ENCODE measurements at regions of chr19 and their contacts with region 1.

Region 1: DNA sequence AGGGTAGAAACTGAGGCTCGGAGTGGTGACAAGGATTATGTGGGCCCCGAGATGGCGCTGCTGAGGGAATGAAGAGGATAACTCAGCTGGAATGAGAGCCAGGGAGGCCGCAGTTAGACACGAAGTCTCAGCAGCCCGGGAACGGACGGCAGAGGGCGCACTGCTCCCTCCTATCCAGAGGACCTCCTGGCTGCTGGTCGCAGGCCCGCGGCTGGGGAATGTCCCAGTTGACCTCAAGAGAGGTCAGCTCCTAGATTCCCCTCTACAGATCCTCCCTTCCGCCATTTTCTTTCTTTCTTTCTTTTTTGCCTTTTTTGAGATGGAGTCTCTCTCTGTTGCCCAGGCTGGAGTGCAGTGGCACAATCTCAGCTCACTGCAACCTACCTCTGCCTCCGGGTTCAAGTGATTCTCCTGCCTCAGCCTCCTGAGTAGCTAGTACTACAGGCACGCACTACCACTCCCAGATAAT is 24.1 kb upstream of the ASPDH start:
- DNase-seq: peak; percentile 89 to 99
- H3K4me3 ChIP-seq: no peak overlapping the region
- H3K27ac ChIP-seq: no peak overlapping the region
- H3K4me1 ChIP-seq: no peaks in the 10 kb centered on the region
- H3K27me3 ChIP-seq: no peaks in the 10 kb centered on the region
- CTCF ChIP-seq: peak; percentile 98 to 100 (median 99)
- EP300 ChIP-seq: peak in 1 of 2 experiments; percentile 16; a peak in 1 of 3 replicates
- POLR2A ChIP-seq: no peak
- RAD21 ChIP-seq: peak; percentile 89 to 91

Region 2: GRCh38 chr19:50290011-50290410 is 247.8 kb before region 1 on chr19:
- CTCF ChIA-PET with region 1: no interaction called
- POLR2A ChIA-PET with region 1: no interaction called
- DNase-seq: no peak
- H3K4me3 ChIP-seq: no peak overlapping the region
- H3K27ac ChIP-seq: no peak overlapping the region
- H3K4me1 ChIP-seq: peaks cover 0 to 20% (median 4%) of the 10 kb centered on the region in 4 experiments; a peak in 5 of 7 replicates
- H3K27me3 ChIP-seq: no peaks in the 10 kb centered on the region
- CTCF ChIP-seq: peak; percentile 15 to 35 (median 24); a peak in 3 of 4 replicates
- EP300 ChIP-seq: no peak
- POLR2A ChIP-seq: no peak
- RAD21 ChIP-seq: peak; percentile 23 to 32; a peak in 2 of 4 replicates

Region 3: DNA sequence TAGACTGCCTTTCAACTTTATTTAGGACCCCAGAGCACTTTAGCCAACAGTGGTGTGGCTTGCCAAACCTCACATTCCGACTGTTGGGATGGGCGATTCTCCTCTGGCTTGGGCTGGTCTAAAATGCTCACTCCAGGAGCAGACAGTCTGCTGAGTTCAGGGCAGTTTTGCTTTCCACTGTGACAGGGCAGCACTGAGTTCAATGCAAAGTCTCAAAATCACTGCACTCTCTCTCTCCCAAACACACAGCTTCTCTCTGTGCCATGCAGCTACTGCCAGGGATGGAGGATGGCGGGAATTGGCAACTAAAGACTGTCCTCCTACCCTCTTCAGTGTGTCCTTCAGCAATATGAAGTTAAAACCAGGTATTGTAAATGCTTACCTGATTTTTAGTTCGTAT is 185.6 kb before region 1 on chr19:
- CTCF ChIA-PET with region 1: interaction called, 10 read pairs
- POLR2A ChIA-PET with region 1: no interaction called
- DNase-seq: no peak
- H3K4me3 ChIP-seq: no peak overlapping the region
- H3K27ac ChIP-seq: no peak overlapping the region
- H3K4me1 ChIP-seq: no peaks in the 10 kb centered on the region; a peak in 3 of 7 replicates
- H3K27me3 ChIP-seq: no peaks in the 10 kb centered on the region
- CTCF ChIP-seq: no peak
- EP300 ChIP-seq: no peak
- POLR2A ChIP-seq: no peak
- RAD21 ChIP-seq: no peak

Region 4: DNA sequence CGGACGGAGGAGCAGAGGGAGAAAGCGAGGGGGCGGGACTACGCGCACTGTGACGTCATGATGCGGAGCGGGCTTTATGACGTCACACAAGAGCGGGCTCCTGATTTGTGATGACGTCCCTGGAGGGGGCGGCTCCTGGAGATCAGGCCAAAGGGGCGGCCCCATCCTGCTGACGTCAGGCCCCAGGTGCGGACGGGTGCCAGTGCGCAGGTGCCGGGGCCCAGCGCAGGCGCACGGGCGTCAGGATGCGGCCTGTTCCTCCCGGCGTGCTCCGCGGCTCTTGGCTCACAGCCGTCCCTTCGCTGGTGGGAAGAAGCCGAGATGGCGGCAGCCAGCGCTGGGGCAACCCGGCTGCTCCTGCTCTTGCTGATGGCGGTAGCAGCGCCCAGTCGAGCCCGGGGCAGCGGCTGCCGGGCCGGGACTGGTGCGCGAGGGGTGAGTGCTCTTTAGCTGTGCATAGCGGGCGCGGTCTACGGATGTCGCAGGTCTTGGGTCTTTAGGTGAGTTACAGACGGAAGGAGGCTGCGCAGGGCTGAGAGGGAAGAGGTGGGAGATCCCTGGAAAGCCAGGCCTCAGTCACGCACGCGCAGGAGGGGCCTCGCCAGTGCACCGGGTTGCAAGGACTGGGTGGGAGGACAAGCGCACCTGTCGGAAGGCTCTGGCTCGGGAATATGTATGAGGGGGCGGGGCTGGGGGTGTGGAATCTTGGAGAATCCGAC is 61.4 kb before region 1 on chr19 and contains the starts of genes EMC10 and GARIN5A:
- CTCF ChIA-PET with region 1: interaction called, 13 read pairs
- POLR2A ChIA-PET with region 1: no interaction called
- DNase-seq: peak; percentile 93 to 98
- H3K4me3 ChIP-seq: peak within 1 kb of the TSS; percentile 79 to 92 (median 85)
- H3K27ac ChIP-seq: peak within 1 kb of the TSS; percentile 86
- H3K4me1 ChIP-seq: no peaks in the 10 kb centered on the region
- H3K27me3 ChIP-seq: no peaks in the 10 kb centered on the region; a peak in 1 of 7 replicates
- CTCF ChIP-seq: peak in 1 of 3 experiments; percentile 5; a peak in 1 of 4 replicates
- EP300 ChIP-seq: no peak
- POLR2A ChIP-seq: peak in 1 of 2 experiments; percentile 92; a peak in 2 of 3 replicates
- RAD21 ChIP-seq: no peak
- total RNA-seq, gene EMC10: 103 and 105 TPM in 2 replicates
- total RNA-seq, gene GARIN5A: 8.1 and 9.1 TPM in 2 replicates

Region 5: DNA sequence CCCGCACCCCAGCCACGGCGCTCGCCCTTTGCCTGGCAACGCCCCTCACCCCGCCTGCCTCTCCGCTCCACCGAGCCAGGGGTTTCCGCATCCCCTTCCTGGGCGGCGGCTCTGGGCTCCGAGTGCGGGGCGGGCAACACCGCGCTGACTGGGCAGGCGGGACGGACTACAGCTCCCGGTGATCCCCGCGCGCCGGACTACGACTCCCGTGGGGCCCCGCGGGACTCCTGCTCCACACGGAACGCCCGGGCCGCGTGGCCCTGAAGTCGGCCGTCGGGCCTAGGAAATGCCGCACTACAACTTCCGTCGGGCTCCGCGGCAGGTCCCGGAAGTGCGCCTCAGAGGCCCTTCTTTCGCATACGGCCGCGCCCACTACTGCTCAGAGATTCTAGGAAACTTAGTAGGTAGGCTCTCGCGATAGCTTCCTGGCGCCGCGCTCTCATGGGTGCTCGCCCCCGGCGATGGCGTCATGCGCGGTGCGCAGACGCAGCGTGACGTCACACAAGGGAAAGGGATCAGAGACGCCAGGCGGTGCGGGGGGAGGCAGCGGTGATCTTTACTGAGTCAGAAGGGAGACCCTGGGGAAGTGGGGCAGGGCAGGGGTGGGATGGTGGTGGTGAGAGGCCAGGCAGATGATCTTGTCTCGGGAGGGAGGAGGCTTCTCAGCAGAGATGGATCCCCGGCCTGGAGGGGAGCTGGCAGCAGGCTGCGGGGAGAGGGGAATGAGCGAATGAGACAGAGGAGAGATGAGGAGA is 26.6 kb before region 1 on chr19 and contains the start of gene JOSD2:
- CTCF ChIA-PET with region 1: interaction called, 206 read pairs
- POLR2A ChIA-PET with region 1: no interaction called
- DNase-seq: peak; percentile 91 to 94
- H3K4me3 ChIP-seq: peak within 1 kb of the TSS; percentile 42 to 62 (median 56)
- H3K27ac ChIP-seq: peak within 1 kb of the TSS; percentile 32; the same call in 1 of the 2 replicates
- H3K4me1 ChIP-seq: peaks cover 0 to 6% (median 4%) of the 10 kb centered on the region in 4 experiments; a peak in 4 of 7 replicates
- H3K27me3 ChIP-seq: peaks cover 0 to 26% (median 15%) of the 10 kb centered on the region in 4 experiments; a peak in 6 of 7 replicates
- CTCF ChIP-seq: no peak; a peak in 1 of 4 replicates
- EP300 ChIP-seq: no peak
- POLR2A ChIP-seq: no peak
- RAD21 ChIP-seq: no peak
- total RNA-seq, gene JOSD2: 1.9 and 3.6 TPM in 2 replicates

Region 6: GRCh38 chr19:50590191-50590590 is 52.4 kb after region 1 on chr19:
- CTCF ChIA-PET with region 1: interaction called, 12 read pairs
- POLR2A ChIA-PET with region 1: no interaction called
- DNase-seq: no peak
- H3K4me3 ChIP-seq: no peak overlapping the region
- H3K27ac ChIP-seq: no peak overlapping the region
- H3K4me1 ChIP-seq: no peaks in the 10 kb centered on the region
- H3K27me3 ChIP-seq: peaks cover 0 to 4% (median 0%) of the 10 kb centered on the region in 4 experiments; a peak in 4 of 7 replicates
- CTCF ChIP-seq: no peak
- EP300 ChIP-seq: no peak
- POLR2A ChIP-seq: no peak
- RAD21 ChIP-seq: no peak

Region 7: DNA sequence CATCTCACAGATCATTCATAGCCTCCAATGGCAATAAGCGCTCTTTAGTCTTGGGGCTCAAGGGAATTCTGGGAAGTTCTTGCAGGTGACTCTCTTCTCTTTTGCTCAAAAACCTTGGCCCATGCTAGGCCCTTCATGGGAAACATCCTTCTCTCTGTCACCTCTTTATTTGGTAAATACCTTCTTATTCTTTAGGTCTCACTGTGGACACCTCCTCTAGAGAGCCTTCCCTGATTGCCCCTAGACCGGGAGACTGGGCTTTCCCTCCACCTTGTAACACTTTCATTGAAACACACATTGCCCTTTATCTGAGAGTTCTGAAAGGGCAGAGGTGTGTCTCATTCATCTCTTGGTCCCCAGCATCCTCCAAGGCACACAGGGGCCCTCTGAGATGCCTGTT is 113.4 kb after region 1 on chr19:
- CTCF ChIA-PET with region 1: no interaction called
- POLR2A ChIA-PET with region 1: no interaction called
- DNase-seq: no peak
- H3K4me3 ChIP-seq: no peak overlapping the region
- H3K27ac ChIP-seq: no peak overlapping the region
- H3K4me1 ChIP-seq: peaks cover 0 to 10% (median 5%) of the 10 kb centered on the region in 4 experiments; a peak in 6 of 7 replicates
- H3K27me3 ChIP-seq: peaks cover 0 to 2% (median 1%) of the 10 kb centered on the region in 4 experiments; a peak in 4 of 7 replicates
- CTCF ChIP-seq: no peak
- EP300 ChIP-seq: no peak
- POLR2A ChIP-seq: no peak
- RAD21 ChIP-seq: no peak

Region 8: GRCh38 chr19:50663482-50663790 is 125.6 kb after region 1 on chr19:
- CTCF ChIA-PET with region 1: interaction called, 14 read pairs
- POLR2A ChIA-PET with region 1: interaction called, 4 read pairs
- DNase-seq: no peak
- H3K4me3 ChIP-seq: no peak overlapping the region
- H3K27ac ChIP-seq: no peak overlapping the region
- H3K4me1 ChIP-seq: peaks cover 0 to 13% (median 8%) of the 10 kb centered on the region in 4 experiments; a peak in 5 of 7 replicates
- H3K27me3 ChIP-seq: peaks cover 19 to 25% (median 22%) of the 10 kb centered on the region in 4 experiments
- CTCF ChIP-seq: peak in 1 of 3 experiments; percentile 19; a peak in 1 of 4 replicates
- EP300 ChIP-seq: no peak
- POLR2A ChIP-seq: no peak
- RAD21 ChIP-seq: no peak

Region 9: GRCh38 chr19:50745221-50745620 is 207.4 kb after region 1 on chr19:
- CTCF ChIA-PET with region 1: interaction called, 11 read pairs
- POLR2A ChIA-PET with region 1: no interaction called
- DNase-seq: no peak
- H3K4me3 ChIP-seq: no peak overlapping the region
- H3K27ac ChIP-seq: no peak overlapping the region
- H3K4me1 ChIP-seq: 0 out of 7 replicates have a peak, but pooled peaks cover 0 to under 1% (median 0%) of the 10 kb centered on the region in 4 experiments
- H3K27me3 ChIP-seq: 0 out of 7 replicates have a peak, but pooled peaks cover 0 to 2% (median 0%) of the 10 kb centered on the region in 4 experiments
- CTCF ChIP-seq: no peak
- EP300 ChIP-seq: no peak
- POLR2A ChIP-seq: no peak
- RAD21 ChIP-seq: no peak